PC-9 (cell line): ENCODE measurements at regions of chr3 and their contacts with region 1.

Region 1: GRCh38 chr3:2156244-2156847 is 57.7 kb downstream of the CNTN4 start:
- DNase-seq: peak in 1 of 2 experiments; percentile 3
- H3K4me3 ChIP-seq: no peak overlapping the region
- H3K27ac ChIP-seq: no peak overlapping the region
- H3K4me1 ChIP-seq: no peaks in the 10 kb centered on the region
- H3K27me3 ChIP-seq: no peaks in the 10 kb centered on the region
- CTCF ChIP-seq: peak; percentile 47

Region 2: GRCh38 chr3:632572-633170 is 1523.7 kb before region 1 on chr3:
- CTCF ChIA-PET with region 1: no interaction called
- POLR2A ChIA-PET with region 1: no interaction called
- intact Hi-C with region 1: loop called (anchors 5 kb)
- DNase-seq: peak in 1 of 2 experiments; percentile 39
- H3K4me3 ChIP-seq: no peak overlapping the region
- H3K27ac ChIP-seq: no peak overlapping the region
- H3K4me1 ChIP-seq: no peaks in the 10 kb centered on the region
- H3K27me3 ChIP-seq: no peaks in the 10 kb centered on the region
- CTCF ChIP-seq: peak; percentile 71

Region 3: DNA sequence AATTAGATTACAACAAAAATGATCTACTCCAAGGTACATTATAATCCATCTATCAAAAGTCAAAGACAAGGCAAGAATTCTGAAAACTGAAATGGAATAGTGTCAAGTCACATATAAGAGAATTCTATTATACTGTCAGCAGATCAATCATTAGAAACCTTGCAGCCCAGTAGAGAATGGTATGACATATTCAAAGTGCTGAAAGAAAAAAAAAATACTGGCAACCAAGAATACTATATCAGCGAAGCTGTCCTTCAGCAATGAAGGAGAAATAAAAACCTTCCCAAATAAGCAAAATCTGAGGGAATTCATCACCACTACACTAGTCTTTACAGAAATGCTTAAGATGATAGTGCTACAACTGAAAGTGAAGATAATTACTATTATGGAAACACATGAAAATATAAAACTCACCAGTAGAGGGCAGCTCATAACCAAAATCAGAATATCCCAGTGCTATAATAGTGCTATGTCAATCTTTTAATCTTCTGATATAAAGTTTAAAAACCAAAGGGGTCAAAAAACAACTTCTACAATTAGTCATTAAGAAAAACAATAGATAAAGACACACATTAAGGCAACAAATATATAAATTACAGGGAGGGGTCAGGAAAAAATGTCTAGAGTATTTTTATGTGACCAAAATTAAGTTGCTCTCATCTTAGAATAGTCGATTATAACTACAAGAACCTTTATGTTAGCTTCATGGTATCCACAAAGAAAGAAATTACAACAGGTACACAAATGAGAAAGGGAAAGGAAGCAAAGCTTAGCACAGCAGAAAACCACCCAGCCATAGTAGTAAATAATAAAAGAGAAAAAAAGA is 1254.2 kb before region 1 on chr3:
- CTCF ChIA-PET with region 1: no interaction called
- POLR2A ChIA-PET with region 1: no interaction called
- intact Hi-C with region 1: loop called (anchors 5 kb)
- DNase-seq: no peak
- H3K4me3 ChIP-seq: no peak overlapping the region
- H3K27ac ChIP-seq: no peak overlapping the region
- H3K4me1 ChIP-seq: no peaks in the 10 kb centered on the region
- H3K27me3 ChIP-seq: no peaks in the 10 kb centered on the region
- CTCF ChIP-seq: peak; percentile 64

Region 4: DNA sequence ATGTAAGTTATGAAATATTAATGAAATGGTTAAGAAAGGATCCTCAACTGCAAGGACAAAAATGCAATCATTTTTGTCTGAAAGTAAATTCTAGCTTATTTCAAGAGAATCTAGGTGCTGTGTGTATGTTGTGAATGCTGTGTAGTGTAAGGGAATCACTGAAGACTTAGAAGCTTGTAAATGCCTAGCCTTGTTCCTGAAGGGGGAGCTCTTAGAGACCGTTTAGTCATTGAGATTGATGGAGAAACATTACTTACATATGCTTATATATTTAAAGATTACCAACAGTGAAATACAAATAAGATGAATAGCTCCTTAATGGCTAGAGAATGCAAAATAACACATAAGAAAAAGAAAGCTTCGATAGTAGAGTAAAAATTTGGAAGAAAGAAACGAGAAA is 10.2 kb after region 1 on chr3:
- CTCF ChIA-PET with region 1: no interaction called
- POLR2A ChIA-PET with region 1: no interaction called
- intact Hi-C with region 1: no loop called
- DNase-seq: no peak
- H3K4me3 ChIP-seq: no peak overlapping the region
- H3K27ac ChIP-seq: no peak overlapping the region
- H3K4me1 ChIP-seq: no peaks in the 10 kb centered on the region
- H3K27me3 ChIP-seq: no peaks in the 10 kb centered on the region
- CTCF ChIP-seq: no peak

Region 5: DNA sequence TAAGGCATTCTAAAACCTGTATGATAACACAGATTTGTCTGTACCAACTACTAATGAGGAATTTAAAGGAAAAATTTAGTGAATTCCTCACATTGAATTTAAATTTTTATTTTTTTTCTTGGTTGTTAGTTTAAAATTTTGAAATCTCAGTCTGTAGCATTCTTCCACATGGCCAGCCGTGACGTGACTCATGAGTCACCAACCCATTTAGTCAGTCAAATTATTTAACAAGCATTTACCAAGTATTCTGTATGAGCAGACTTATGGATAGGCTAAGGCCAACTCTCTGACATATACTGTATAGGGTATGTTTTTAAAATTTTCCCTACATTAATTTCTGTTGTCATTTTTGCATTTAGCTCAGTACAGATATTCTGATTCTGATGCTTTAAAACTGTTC is 55.2 kb after region 1 on chr3:
- CTCF ChIA-PET with region 1: no interaction called
- POLR2A ChIA-PET with region 1: no interaction called
- intact Hi-C with region 1: no loop called
- DNase-seq: no peak
- H3K4me3 ChIP-seq: no peak overlapping the region
- H3K27ac ChIP-seq: no peak overlapping the region
- H3K4me1 ChIP-seq: no peaks in the 10 kb centered on the region
- H3K27me3 ChIP-seq: no peaks in the 10 kb centered on the region
- CTCF ChIP-seq: no peak